B cell (primary cell): ENCODE measurements at regions of chr13 and their contacts with region 1.

Region 1: GRCh38 chr13:28658796-28659620 is at the start of gene POMP:
- DNase-seq: peak; percentile 97
- ATAC-seq: peak; percentile 92
- H3K4me3 ChIP-seq: peak within 1 kb of the TSS; percentile 78 to 97 (median 89)
- H3K4me3 Mint-ChIP-seq: peak within 1 kb of the TSS; percentile 97
- H3K27ac ChIP-seq: peak within 1 kb of the TSS; percentile 86 to 93
- H3K27ac Mint-ChIP-seq: peak within 1 kb of the TSS; percentile 98
- H3K4me1 ChIP-seq: peaks cover 43 to 44% of the 10 kb centered on the region in 2 donors
- H3K4me1 Mint-ChIP-seq: peaks cover 61% of the 10 kb centered on the region
- H3K27me3 ChIP-seq: no peaks in the 10 kb centered on the region
- H3K27me3 Mint-ChIP-seq: no peaks in the 10 kb centered on the region
- CTCF ChIP-seq: no peak
- total RNA-seq, gene POMP: 18.9 and 28.7 TPM in 2 replicates

Region 2: DNA sequence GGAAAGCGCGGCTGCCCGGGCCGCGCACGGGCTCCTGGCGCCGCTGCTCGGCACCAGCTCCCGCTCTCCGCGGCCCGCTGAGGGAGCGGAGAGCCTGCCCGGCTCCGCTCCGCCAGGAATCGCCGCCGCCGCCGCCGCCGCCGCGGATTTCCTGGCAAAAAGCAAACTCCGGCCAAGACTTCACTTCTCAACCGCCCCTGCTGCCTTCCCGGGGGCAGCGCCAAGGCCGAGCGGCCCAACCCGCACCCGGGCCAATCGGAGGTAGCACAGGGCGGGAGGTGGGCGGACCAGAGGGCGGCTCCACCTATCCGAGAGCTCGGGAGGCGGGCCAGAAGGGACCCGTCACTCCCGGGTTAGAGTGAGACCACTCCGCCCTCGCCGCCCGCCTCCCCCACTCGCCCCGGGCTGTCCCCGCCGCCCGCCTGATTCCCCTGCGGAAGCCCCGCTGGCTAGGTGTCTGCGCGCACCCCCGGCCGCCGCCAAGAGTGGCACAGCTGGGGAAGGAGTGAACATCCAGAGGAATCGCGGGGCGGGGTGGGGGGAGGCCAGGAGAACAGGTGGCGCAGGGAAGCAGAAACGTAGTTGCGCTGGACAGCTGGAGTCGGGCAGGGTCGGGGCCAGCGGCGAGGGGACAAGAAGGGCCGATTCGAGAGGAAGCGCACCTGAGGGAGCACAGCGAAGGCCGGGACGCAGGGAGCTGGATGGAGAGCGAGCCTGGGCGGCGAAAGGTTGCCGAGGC is 1038.5 kb before region 1 on chr13 and contains the start of gene LNX2:
- CTCF ChIA-PET with region 1: no interaction called
- POLR2A ChIA-PET with region 1: no interaction called
- intact Hi-C with region 1: loop called (anchors 2 kb)
- DNase-seq: peak; percentile 96
- ATAC-seq: peak; percentile 83
- H3K4me3 ChIP-seq: peak within 1 kb of the TSS; percentile 77 to 92 (median 90)
- H3K4me3 Mint-ChIP-seq: peak within 1 kb of the TSS; percentile 93
- H3K27ac ChIP-seq: peak within 1 kb of the TSS; percentile 98
- H3K27ac Mint-ChIP-seq: peak within 1 kb of the TSS; percentile 92
- H3K4me1 ChIP-seq: peaks cover 27 to 28% of the 10 kb centered on the region in 2 donors
- H3K4me1 Mint-ChIP-seq: peaks cover 62% of the 10 kb centered on the region
- H3K27me3 ChIP-seq: no peaks in the 10 kb centered on the region
- H3K27me3 Mint-ChIP-seq: no peaks in the 10 kb centered on the region
- CTCF ChIP-seq: no peak
- total RNA-seq, gene LNX2: 10.0 and 10.9 TPM in 2 replicates

Region 3: DNA sequence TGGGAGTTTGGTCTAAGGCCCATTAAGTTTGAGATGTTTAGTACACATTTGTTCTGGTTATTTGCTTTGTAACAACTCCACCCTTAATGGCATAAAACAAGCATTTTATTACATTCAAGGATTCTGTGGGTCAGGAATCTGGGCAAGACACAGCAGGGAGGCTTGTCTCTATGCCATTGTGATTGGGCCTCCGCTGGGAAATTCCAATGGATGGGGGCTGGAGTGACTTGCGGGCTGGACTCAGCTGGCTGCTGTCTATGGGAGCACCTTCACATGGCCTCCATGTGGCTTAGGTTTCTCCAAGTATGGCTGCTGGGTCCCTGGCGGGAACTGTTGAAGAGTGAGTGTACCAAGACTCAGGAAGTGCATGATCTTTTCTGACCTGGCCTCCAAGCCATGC is 361.7 kb before region 1 on chr13:
- CTCF ChIA-PET with region 1: no interaction called
- POLR2A ChIA-PET with region 1: interaction called, 10 read pairs
- intact Hi-C with region 1: no loop called
- DNase-seq: no peak
- ATAC-seq: no peak
- H3K4me3 ChIP-seq: no peak overlapping the region
- H3K4me3 Mint-ChIP-seq: no peak overlapping the region
- H3K27ac ChIP-seq: no peak overlapping the region
- H3K27ac Mint-ChIP-seq: no peak overlapping the region
- H3K4me1 ChIP-seq: no peaks in the 10 kb centered on the region
- H3K4me1 Mint-ChIP-seq: peaks cover 1% of the 10 kb centered on the region
- H3K27me3 ChIP-seq: no peaks in the 10 kb centered on the region
- H3K27me3 Mint-ChIP-seq: no peaks in the 10 kb centered on the region
- CTCF ChIP-seq: no peak

Region 4: GRCh38 chr13:28429685-28430290 is 229.2 kb before region 1 on chr13:
- CTCF ChIA-PET with region 1: no interaction called
- POLR2A ChIA-PET with region 1: no interaction called
- intact Hi-C with region 1: loop called (anchors 1 kb)
- DNase-seq: peak; percentile 79
- ATAC-seq: peak; percentile 89
- H3K4me3 ChIP-seq: peak overlapping the region; percentile 44 to 78 (median 64)
- H3K4me3 Mint-ChIP-seq: peak overlapping the region; percentile 89
- H3K27ac ChIP-seq: peak overlapping the region; percentile 88 to 93
- H3K27ac Mint-ChIP-seq: peak overlapping the region; percentile 98
- H3K4me1 ChIP-seq: peaks cover 27 to 28% of the 10 kb centered on the region in 2 donors
- H3K4me1 Mint-ChIP-seq: peaks cover 38% of the 10 kb centered on the region
- H3K27me3 ChIP-seq: no peaks in the 10 kb centered on the region
- H3K27me3 Mint-ChIP-seq: peaks cover under 1% of the 10 kb centered on the region
- CTCF ChIP-seq: no peak

Region 5: DNA sequence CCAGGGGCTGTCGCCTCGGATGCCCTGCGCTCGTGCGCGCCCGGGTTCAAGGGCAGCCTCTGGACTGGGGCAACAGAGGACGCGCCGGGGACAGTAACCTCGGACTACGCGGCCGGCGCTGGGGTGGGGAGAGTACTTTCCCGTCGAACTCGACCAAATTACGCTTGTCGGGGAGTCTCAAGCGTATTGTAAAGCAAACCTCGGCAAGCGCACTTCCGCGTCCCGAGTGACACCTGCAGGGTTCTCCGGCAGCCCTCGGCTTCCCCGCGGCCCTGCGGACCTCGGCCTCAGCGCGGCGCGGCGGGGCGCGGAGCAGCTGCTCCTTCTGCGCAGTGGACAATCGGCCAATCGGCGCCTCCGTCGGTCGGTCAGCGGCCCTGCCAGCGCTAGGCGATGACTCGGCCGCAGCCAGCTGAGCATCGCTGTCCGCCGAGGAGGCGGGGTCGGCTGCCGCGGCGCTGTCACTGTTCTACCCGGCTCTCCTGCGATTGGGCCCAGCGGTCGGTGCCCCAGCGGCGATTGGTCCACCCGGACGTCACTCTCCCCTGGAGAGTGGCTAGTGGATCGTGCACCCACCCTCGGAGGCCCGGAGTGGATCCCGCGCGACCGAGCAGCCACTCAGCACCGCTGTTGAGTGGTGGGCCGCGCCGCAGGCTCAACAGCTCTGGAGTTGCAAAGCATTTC is 59.7 kb after region 1 on chr13 and contains the start of gene SLC46A3:
- CTCF ChIA-PET with region 1: no interaction called
- POLR2A ChIA-PET with region 1: interaction called, 3 read pairs
- intact Hi-C with region 1: loop called (anchors 1 kb)
- DNase-seq: peak; percentile 97
- ATAC-seq: peak; percentile 98
- H3K4me3 ChIP-seq: peak within 1 kb of the TSS; percentile 61 to 91 (median 87)
- H3K4me3 Mint-ChIP-seq: peak within 1 kb of the TSS; percentile 96
- H3K27ac ChIP-seq: peak within 1 kb of the TSS; percentile 84 to 89
- H3K27ac Mint-ChIP-seq: peak within 1 kb of the TSS; percentile 98
- H3K4me1 ChIP-seq: peaks cover 14 to 18% of the 10 kb centered on the region in 2 donors
- H3K4me1 Mint-ChIP-seq: peaks cover 24% of the 10 kb centered on the region
- H3K27me3 ChIP-seq: no peaks in the 10 kb centered on the region
- H3K27me3 Mint-ChIP-seq: no peaks in the 10 kb centered on the region
- CTCF ChIP-seq: peak; percentile 24
- total RNA-seq, gene SLC46A3: 12.4 and 13.1 TPM in 2 replicates